Activated B cell treated with CpG ODN at 0.5 μM for 24 hours (primary cell): ENCODE measurements at regions of chr9 and their contacts with region 1.

Region 1: GRCh38 chr9:112074250-112075008 is 100.7 kb downstream of the SUSD1 start:
- DNase-seq: peak; percentile 25
- ATAC-seq: peak; percentile 83
- H3K4me3 Mint-ChIP-seq: peak overlapping the region; percentile 78
- H3K27ac Mint-ChIP-seq: peak overlapping the region; percentile 91
- H3K4me1 Mint-ChIP-seq: peaks cover 79% of the 10 kb centered on the region
- H3K27me3 Mint-ChIP-seq: no peaks in the 10 kb centered on the region
- CTCF ChIP-seq: peak; percentile 56

Region 2: DNA sequence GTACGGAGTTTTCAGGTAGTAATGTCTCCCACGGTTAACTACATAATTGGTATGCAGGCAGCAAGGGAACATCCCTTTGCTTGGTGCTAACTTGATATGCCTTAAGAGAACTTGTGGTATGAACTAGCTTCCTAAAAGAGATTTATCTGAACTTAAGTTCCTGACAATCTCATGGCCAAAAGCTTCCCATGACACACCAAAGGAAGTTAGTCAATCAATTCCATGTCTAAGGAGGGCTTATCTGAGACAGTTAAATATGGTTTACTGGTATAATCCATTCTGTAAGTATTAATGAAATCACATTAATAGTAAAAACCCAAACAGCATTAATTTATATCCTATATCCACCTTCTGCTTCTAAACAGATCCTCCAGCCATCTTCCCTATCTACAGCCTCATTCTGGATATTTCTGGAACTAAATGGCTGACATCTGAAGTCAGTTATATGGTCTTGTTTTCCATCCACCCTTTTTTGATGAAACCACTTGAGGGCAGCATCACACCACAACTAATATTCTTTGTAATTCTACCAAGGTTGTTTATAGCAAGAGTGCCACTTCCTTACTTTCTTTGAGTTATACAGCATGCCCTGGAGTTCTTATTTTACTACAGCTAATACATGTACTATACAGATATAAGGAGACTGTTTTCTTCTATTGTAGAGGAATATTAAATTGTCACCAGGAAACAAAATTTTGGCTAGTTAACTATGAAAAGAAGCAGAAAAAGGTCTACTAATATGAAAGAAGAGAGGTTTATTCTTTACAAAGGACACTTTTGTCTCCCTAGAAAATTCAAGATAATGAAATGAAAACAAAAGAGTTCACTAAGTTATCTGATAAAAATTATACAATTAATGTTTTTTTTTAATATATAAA is 314.4 kb before region 1 on chr9:
- CTCF ChIA-PET with region 1: interaction called, 121 read pairs
- POLR2A ChIA-PET with region 1: interaction called, 13 read pairs
- intact Hi-C with region 1: loop called (anchors 1 kb)
- DNase-seq: no peak
- ATAC-seq: peak; percentile 84
- H3K4me3 Mint-ChIP-seq: no peak overlapping the region
- H3K27ac Mint-ChIP-seq: no peak overlapping the region
- H3K4me1 Mint-ChIP-seq: peaks cover 4% of the 10 kb centered on the region
- H3K27me3 Mint-ChIP-seq: no peaks in the 10 kb centered on the region
- CTCF ChIP-seq: peak; percentile 55

Region 3: GRCh38 chr9:111916234-111916645 is 158.2 kb before region 1 on chr9:
- CTCF ChIA-PET with region 1: interaction called, 9 read pairs
- POLR2A ChIA-PET with region 1: no interaction called
- intact Hi-C with region 1: loop called (anchors 1 kb)
- DNase-seq: no peak
- ATAC-seq: peak; percentile 41
- H3K4me3 Mint-ChIP-seq: peak overlapping the region; percentile 9
- H3K27ac Mint-ChIP-seq: peak overlapping the region; percentile 81
- H3K4me1 Mint-ChIP-seq: peaks cover 82% of the 10 kb centered on the region
- H3K27me3 Mint-ChIP-seq: no peaks in the 10 kb centered on the region
- CTCF ChIP-seq: no peak

Region 4: GRCh38 chr9:111937781-111938426 is 136.5 kb before region 1 on chr9:
- CTCF ChIA-PET with region 1: interaction called, 5 read pairs
- POLR2A ChIA-PET with region 1: interaction called, 10 read pairs
- intact Hi-C with region 1: no loop called
- DNase-seq: no peak
- ATAC-seq: peak; percentile 84
- H3K4me3 Mint-ChIP-seq: peak overlapping the region; percentile 69
- H3K27ac Mint-ChIP-seq: peak overlapping the region; percentile 86
- H3K4me1 Mint-ChIP-seq: peaks cover 43% of the 10 kb centered on the region
- H3K27me3 Mint-ChIP-seq: no peaks in the 10 kb centered on the region
- CTCF ChIP-seq: no peak

Region 5: GRCh38 chr9:111992523-111992922 is 81.9 kb before region 1 on chr9:
- CTCF ChIA-PET with region 1: interaction called, 4 read pairs
- POLR2A ChIA-PET with region 1: interaction called, 10 read pairs
- intact Hi-C with region 1: no loop called
- DNase-seq: no peak
- ATAC-seq: peak; percentile 92
- H3K4me3 Mint-ChIP-seq: no peak overlapping the region
- H3K27ac Mint-ChIP-seq: peak overlapping the region; percentile 79
- H3K4me1 Mint-ChIP-seq: peaks cover 47% of the 10 kb centered on the region
- H3K27me3 Mint-ChIP-seq: no peaks in the 10 kb centered on the region
- CTCF ChIP-seq: no peak

Region 6: GRCh38 chr9:112028280-112029221 is 45.9 kb before region 1 on chr9:
- CTCF ChIA-PET with region 1: interaction called, 23 read pairs
- POLR2A ChIA-PET with region 1: interaction called, 208 read pairs
- intact Hi-C with region 1: loop called (anchors 1 kb)
- DNase-seq: peak; percentile 41
- ATAC-seq: peak; percentile 79
- H3K4me3 Mint-ChIP-seq: peak overlapping the region; percentile 82
- H3K27ac Mint-ChIP-seq: peak overlapping the region; percentile 91
- H3K4me1 Mint-ChIP-seq: peaks cover 77% of the 10 kb centered on the region
- H3K27me3 Mint-ChIP-seq: no peaks in the 10 kb centered on the region
- CTCF ChIP-seq: no peak

Region 7: GRCh38 chr9:112061152-112061740 is 13.2 kb before region 1 on chr9:
- CTCF ChIA-PET with region 1: interaction called, 5 read pairs
- POLR2A ChIA-PET with region 1: interaction called, 13 read pairs
- intact Hi-C with region 1: no loop called
- DNase-seq: no peak
- ATAC-seq: peak; percentile 70
- H3K4me3 Mint-ChIP-seq: no peak overlapping the region
- H3K27ac Mint-ChIP-seq: peak overlapping the region; percentile 85
- H3K4me1 Mint-ChIP-seq: peaks cover 67% of the 10 kb centered on the region
- H3K27me3 Mint-ChIP-seq: no peaks in the 10 kb centered on the region
- CTCF ChIP-seq: no peak

Region 8: GRCh38 chr9:112288029-112288428 is 213.6 kb after region 1 on chr9:
- CTCF ChIA-PET with region 1: no interaction called
- POLR2A ChIA-PET with region 1: no interaction called
- intact Hi-C with region 1: no loop called
- DNase-seq: no peak
- ATAC-seq: no peak
- H3K4me3 Mint-ChIP-seq: no peak overlapping the region
- H3K27ac Mint-ChIP-seq: no peak overlapping the region
- H3K4me1 Mint-ChIP-seq: peaks cover 22% of the 10 kb centered on the region
- H3K27me3 Mint-ChIP-seq: no peaks in the 10 kb centered on the region
- CTCF ChIP-seq: no peak